CD8-positive, alpha-beta T cell (primary cell): ENCODE measurements at regions of chr5 and their contacts with region 1.

Region 1: DNA sequence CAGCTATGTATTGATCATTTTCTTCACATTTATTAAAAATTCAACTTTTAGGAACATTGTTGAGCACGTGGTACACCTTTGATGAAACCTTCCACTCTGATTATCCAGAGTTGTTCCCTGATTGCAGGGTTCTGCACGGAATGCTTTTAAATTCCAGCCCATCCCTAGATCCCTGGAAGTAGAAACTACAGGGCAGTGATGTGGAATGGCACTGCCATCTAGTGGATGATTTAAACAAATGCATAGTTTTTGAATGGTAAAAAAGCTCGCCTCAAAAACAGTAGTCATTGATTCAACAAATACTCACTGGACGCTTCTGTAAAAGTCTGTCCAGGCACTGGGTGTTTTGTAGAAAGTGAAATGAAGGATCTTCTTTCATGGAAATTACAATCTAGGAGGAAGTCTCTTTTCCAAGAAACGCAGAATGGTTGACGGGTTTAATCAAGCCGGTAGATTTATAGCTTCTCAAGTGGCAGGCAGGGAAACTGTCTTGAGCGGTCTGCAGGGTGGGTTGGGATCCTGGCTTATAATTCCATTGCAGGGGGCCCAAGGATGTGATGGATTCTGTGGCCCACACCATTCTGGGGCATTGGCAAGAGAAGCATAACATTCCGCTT is 118.4 kb downstream of the ARHGAP26 start:
- DNase-seq: peak in 2 of 9 experiments; percentile 45 to 55
- ATAC-seq: no peak
- H3K4me3 ChIP-seq: no peak overlapping the region
- H3K4me3 Mint-ChIP-seq: no peak overlapping the region
- H3K27ac ChIP-seq: no peak overlapping the region
- H3K27ac Mint-ChIP-seq: no peak overlapping the region
- H3K4me1 ChIP-seq: no peaks in the 10 kb centered on the region
- H3K4me1 Mint-ChIP-seq: peaks cover 18% of the 10 kb centered on the region
- H3K27me3 ChIP-seq: no peaks in the 10 kb centered on the region
- H3K27me3 Mint-ChIP-seq: no peaks in the 10 kb centered on the region
- CTCF ChIP-seq: peak; percentile 90

Region 2: DNA sequence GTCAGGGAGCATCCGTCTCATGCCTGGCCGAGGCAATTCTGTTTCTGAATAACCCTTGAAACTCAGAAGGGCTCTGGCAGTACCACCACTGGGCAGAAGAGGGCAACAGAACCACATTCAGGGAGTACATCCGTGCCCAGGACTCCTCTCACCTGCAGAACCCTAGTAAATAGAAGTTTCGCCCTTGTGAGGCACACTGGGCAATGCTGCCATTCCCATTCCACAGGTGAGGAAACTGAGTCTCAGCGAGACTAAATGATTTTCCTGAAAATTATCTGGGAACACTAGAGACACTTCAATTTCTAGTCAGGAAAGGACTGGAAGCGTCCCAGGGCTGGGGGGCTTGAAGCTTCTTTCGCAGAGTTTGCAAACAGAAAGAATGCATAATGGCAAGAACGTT is 277.4 kb before region 1 on chr5:
- CTCF ChIA-PET with region 1: interaction called, 5 read pairs
- POLR2A ChIA-PET with region 1: no interaction called
- intact Hi-C with region 1: loop called (anchors 2 to 5 kb)
- DNase-seq: peak; percentile 30 to 73 (median 60)
- ATAC-seq: peak; percentile 89
- H3K4me3 ChIP-seq: no peak overlapping the region
- H3K4me3 Mint-ChIP-seq: no peak overlapping the region
- H3K27ac ChIP-seq: no peak overlapping the region
- H3K27ac Mint-ChIP-seq: no peak overlapping the region
- H3K4me1 ChIP-seq: no peaks in the 10 kb centered on the region
- H3K4me1 Mint-ChIP-seq: peaks cover 3% of the 10 kb centered on the region
- H3K27me3 ChIP-seq: no peaks in the 10 kb centered on the region
- H3K27me3 Mint-ChIP-seq: peaks cover 9% of the 10 kb centered on the region
- CTCF ChIP-seq: peak; percentile 81

Region 3: GRCh38 chr5:142713121-142713706 is 175.4 kb before region 1 on chr5:
- CTCF ChIA-PET with region 1: interaction called, 258 read pairs
- POLR2A ChIA-PET with region 1: no interaction called
- intact Hi-C with region 1: loop called (anchors 1 to 2 kb)
- DNase-seq: peak; percentile 70 to 93 (median 83)
- ATAC-seq: peak; percentile 95
- H3K4me3 ChIP-seq: peak overlapping the region; percentile 61 to 82
- H3K4me3 Mint-ChIP-seq: peak overlapping the region; percentile 76
- H3K27ac ChIP-seq: peak overlapping the region in 1 of 2 experiments; percentile 49
- H3K27ac Mint-ChIP-seq: peak overlapping the region; percentile 45
- H3K4me1 ChIP-seq: peaks cover 4% of the 10 kb centered on the region
- H3K4me1 Mint-ChIP-seq: peaks cover 18% of the 10 kb centered on the region
- H3K27me3 ChIP-seq: no peaks in the 10 kb centered on the region
- H3K27me3 Mint-ChIP-seq: no peaks in the 10 kb centered on the region
- CTCF ChIP-seq: peak; percentile 98

Region 4: GRCh38 chr5:142874537-142874936 is 14.0 kb before region 1 on chr5:
- CTCF ChIA-PET with region 1: interaction called, 46 read pairs
- POLR2A ChIA-PET with region 1: no interaction called
- intact Hi-C with region 1: no loop called
- DNase-seq: no peak
- ATAC-seq: no peak
- H3K4me3 ChIP-seq: no peak overlapping the region
- H3K4me3 Mint-ChIP-seq: no peak overlapping the region
- H3K27ac ChIP-seq: no peak overlapping the region
- H3K27ac Mint-ChIP-seq: no peak overlapping the region
- H3K4me1 ChIP-seq: no peaks in the 10 kb centered on the region
- H3K4me1 Mint-ChIP-seq: peaks cover 9% of the 10 kb centered on the region
- H3K27me3 ChIP-seq: no peaks in the 10 kb centered on the region
- H3K27me3 Mint-ChIP-seq: no peaks in the 10 kb centered on the region
- CTCF ChIP-seq: no peak

Region 5: GRCh38 chr5:142929587-142929986 is 41.0 kb after region 1 on chr5:
- CTCF ChIA-PET with region 1: no interaction called
- POLR2A ChIA-PET with region 1: no interaction called
- intact Hi-C with region 1: no loop called
- DNase-seq: peak in 8 of 9 experiments; percentile 11 to 87 (median 44)
- ATAC-seq: peak; percentile 77
- H3K4me3 ChIP-seq: no peak overlapping the region
- H3K4me3 Mint-ChIP-seq: no peak overlapping the region
- H3K27ac ChIP-seq: peak overlapping the region; percentile 27 to 72
- H3K27ac Mint-ChIP-seq: peak overlapping the region; percentile 90
- H3K4me1 ChIP-seq: peaks cover 13% of the 10 kb centered on the region
- H3K4me1 Mint-ChIP-seq: peaks cover 53% of the 10 kb centered on the region
- H3K27me3 ChIP-seq: no peaks in the 10 kb centered on the region
- H3K27me3 Mint-ChIP-seq: no peaks in the 10 kb centered on the region
- CTCF ChIP-seq: no peak

Region 6: GRCh38 chr5:143248822-143249579 is 360.4 kb after region 1 on chr5:
- CTCF ChIA-PET with region 1: no interaction called
- POLR2A ChIA-PET with region 1: no interaction called
- intact Hi-C with region 1: no loop called
- DNase-seq: no peak
- ATAC-seq: no peak
- H3K4me3 ChIP-seq: no peak overlapping the region
- H3K4me3 Mint-ChIP-seq: no peak overlapping the region
- H3K27ac ChIP-seq: no peak overlapping the region
- H3K27ac Mint-ChIP-seq: no peak overlapping the region
- H3K4me1 ChIP-seq: no peaks in the 10 kb centered on the region
- H3K4me1 Mint-ChIP-seq: no peaks in the 10 kb centered on the region
- H3K27me3 ChIP-seq: no peaks in the 10 kb centered on the region
- H3K27me3 Mint-ChIP-seq: no peaks in the 10 kb centered on the region
- CTCF ChIP-seq: no peak